Colonic mucosa (tissue), 4 donors: ENCODE measurements at regions of chr11 and their contacts with region 1.

Region 1: GRCh38 chr11:115504276-115505158 is at the start of gene CADM1:
- DNase-seq: peak; percentile 91
- H3K4me3 ChIP-seq: peak within 1 kb of the TSS; percentile 45
- H3K27ac ChIP-seq: peak within 1 kb of the TSS; percentile 69
- H3K4me1 ChIP-seq: peaks cover 2% of the 10 kb centered on the region
- H3K27me3 ChIP-seq: peaks cover 30% of the 10 kb centered on the region
- CTCF ChIP-seq: peak; percentile 63
- total RNA-seq, gene CADM1: 5.2 to 6.4 TPM

Region 2: DNA sequence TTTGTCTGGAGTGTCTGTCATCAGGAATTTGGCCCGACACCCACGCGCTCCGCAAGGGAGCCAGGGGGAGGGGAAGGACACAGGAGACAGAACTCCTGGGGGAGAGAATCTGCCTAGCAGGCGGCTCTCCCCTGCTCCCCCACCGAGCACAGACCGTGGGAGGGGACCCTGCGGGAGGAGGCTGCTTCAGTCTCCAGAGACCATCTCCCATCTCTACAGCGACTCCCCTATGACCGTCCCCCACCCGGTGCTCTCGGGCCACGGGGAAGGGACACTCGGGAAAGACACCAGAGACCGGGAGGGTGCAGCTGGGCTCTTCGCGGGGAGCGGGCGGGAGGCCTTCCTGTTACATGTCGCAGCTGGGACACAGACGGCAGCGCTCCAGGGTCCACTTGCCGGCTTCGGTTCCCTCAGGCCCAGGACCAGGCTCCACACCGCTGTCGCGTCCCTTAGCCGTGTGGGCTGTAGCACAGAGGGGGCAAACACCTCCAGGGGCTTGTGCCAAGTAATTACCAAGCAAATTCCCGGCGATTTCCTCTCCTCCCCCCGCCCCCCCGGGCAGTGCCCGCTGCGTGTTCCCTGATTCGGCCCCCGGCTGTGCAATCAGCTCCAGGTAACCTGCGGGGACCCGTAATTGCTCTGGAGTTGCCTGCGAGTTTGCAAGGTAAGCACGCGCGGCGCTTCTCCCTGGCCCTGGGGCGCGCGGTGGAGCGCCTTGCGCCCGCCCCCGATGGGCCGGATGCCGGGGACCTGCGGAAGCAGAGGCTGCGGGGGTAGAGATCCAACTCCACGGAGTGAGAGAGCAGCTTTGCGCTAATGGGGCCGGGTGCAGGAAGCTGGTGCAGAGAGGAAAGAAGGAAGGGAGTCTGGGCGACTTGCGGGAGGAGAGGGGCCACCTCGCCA is 154.8 kb after region 1 on chr11:
- intact Hi-C with region 1: loop called (anchors 10 kb)
- DNase-seq: no peak
- H3K4me3 ChIP-seq: peak overlapping the region; percentile 24
- H3K27ac ChIP-seq: no peak overlapping the region
- H3K4me1 ChIP-seq: no peaks in the 10 kb centered on the region
- H3K27me3 ChIP-seq: peaks cover 28% of the 10 kb centered on the region
- CTCF ChIP-seq: no peak